PC-9 (cell line): ENCODE measurements at regions of chr15 and their contacts with region 1.

Region 1: GRCh38 chr15:59825913-59826312 is 136.8 kb upstream of the BNIP2 start:
- DNase-seq: peak; percentile 53 to 91
- H3K4me3 ChIP-seq: no peak overlapping the region
- H3K27ac ChIP-seq: peak overlapping the region; percentile 93
- H3K4me1 ChIP-seq: peaks cover 52% of the 10 kb centered on the region
- H3K27me3 ChIP-seq: no peaks in the 10 kb centered on the region
- CTCF ChIP-seq: no peak

Region 2: GRCh38 chr15:59688841-59689625 is 136.9 kb before region 1 on chr15 and contains the start of gene BNIP2:
- CTCF ChIA-PET with region 1: no interaction called
- POLR2A ChIA-PET with region 1: no interaction called
- intact Hi-C with region 1: loop called (anchors 2 kb)
- DNase-seq: peak; percentile 90 to 98
- H3K4me3 ChIP-seq: peak within 1 kb of the TSS; percentile 73
- H3K27ac ChIP-seq: peak within 1 kb of the TSS; percentile 95
- H3K4me1 ChIP-seq: peaks cover 15% of the 10 kb centered on the region
- H3K27me3 ChIP-seq: no peaks in the 10 kb centered on the region
- CTCF ChIP-seq: no peak
- total RNA-seq, gene BNIP2: 59.5 and 64.3 TPM in 2 replicates

Region 3: DNA sequence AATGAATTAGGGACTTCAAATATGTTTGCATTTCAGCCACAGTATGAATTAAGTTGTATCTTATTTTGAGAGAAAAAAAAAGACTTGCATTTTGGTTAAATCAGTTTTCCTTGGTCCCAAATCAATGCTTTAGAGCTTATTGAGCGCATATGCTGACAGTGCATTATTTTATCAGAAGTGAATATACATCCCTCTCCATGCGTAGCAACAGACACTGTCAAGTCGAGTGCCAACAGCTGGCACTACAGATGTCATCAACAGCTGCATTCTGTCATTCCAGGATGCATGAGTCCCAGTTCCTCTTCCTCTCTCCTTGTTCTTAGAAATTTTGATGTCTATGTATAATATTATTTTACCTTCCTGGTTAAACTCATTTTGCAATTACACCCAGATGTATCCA is 22.1 kb after region 1 on chr15:
- CTCF ChIA-PET with region 1: no interaction called
- POLR2A ChIA-PET with region 1: interaction called, 10 read pairs
- intact Hi-C with region 1: no loop called
- DNase-seq: no peak
- H3K4me3 ChIP-seq: no peak overlapping the region
- H3K27ac ChIP-seq: no peak overlapping the region
- H3K4me1 ChIP-seq: no peaks in the 10 kb centered on the region
- H3K27me3 ChIP-seq: no peaks in the 10 kb centered on the region
- CTCF ChIP-seq: no peak

Region 4: GRCh38 chr15:60070838-60071493 is 245.1 kb after region 1 on chr15:
- CTCF ChIA-PET with region 1: no interaction called
- POLR2A ChIA-PET with region 1: interaction called, 19 read pairs
- intact Hi-C with region 1: no loop called
- DNase-seq: peak in 1 of 2 experiments; percentile 70
- H3K4me3 ChIP-seq: no peak overlapping the region
- H3K27ac ChIP-seq: peak overlapping the region; percentile 60
- H3K4me1 ChIP-seq: peaks cover 12% of the 10 kb centered on the region
- H3K27me3 ChIP-seq: no peaks in the 10 kb centered on the region
- CTCF ChIP-seq: no peak

Region 5: GRCh38 chr15:60172143-60172542 is 346.2 kb after region 1 on chr15:
- CTCF ChIA-PET with region 1: no interaction called
- POLR2A ChIA-PET with region 1: interaction called, 15 read pairs
- intact Hi-C with region 1: no loop called
- DNase-seq: no peak
- H3K4me3 ChIP-seq: no peak overlapping the region
- H3K27ac ChIP-seq: no peak overlapping the region
- H3K4me1 ChIP-seq: no peaks in the 10 kb centered on the region; the same call in 1 of the 2 replicates
- H3K27me3 ChIP-seq: no peaks in the 10 kb centered on the region
- CTCF ChIP-seq: no peak

Region 6: DNA sequence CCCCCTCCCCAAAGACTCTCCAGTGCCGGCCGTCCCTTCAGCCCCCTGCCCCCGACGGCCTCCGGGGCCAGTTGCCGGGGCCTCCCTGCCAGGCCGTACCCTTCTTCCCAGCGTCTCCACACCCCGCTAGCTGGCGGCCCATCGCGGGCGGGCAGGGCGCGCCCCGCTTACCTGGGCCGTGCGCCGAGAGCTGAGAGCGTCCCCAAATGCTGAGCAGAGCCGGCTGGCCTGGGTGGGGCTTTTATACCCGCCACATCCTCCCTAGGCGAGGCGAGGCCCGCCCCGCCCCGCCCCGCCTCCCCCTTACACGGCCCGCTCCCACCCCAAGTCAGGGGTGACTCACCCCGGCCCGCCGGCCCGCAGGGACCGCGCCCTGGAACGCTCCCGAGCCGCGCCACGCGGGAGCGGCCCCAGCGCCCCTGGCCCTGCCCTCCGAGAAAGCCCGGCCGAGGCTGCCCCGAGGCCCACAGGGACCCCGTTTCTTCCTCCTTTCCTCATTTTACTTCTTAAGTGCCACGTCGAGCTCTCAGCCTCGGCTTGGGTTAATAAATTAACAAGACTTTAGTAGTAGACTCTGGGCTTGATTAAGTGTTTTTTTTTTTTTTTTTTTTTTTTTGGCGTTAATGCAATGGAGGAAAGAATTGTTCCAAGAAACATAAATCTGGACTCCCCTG is 572.0 kb after region 1 on chr15 and contains the start of gene ANXA2:
- CTCF ChIA-PET with region 1: no interaction called
- POLR2A ChIA-PET with region 1: interaction called, 16 read pairs
- intact Hi-C with region 1: no loop called
- DNase-seq: peak; percentile 54 to 90
- H3K4me3 ChIP-seq: peak within 1 kb of the TSS; percentile 68
- H3K27ac ChIP-seq: peak within 1 kb of the TSS; percentile 94
- H3K4me1 ChIP-seq: peaks cover 51% of the 10 kb centered on the region
- H3K27me3 ChIP-seq: no peaks in the 10 kb centered on the region
- CTCF ChIP-seq: no peak
- total RNA-seq, gene ANXA2: 1,720 and 1,743 TPM in 2 replicates